ENCODE measurements at regions of chr1 and their contacts with region 1.

Region 1: DNA sequence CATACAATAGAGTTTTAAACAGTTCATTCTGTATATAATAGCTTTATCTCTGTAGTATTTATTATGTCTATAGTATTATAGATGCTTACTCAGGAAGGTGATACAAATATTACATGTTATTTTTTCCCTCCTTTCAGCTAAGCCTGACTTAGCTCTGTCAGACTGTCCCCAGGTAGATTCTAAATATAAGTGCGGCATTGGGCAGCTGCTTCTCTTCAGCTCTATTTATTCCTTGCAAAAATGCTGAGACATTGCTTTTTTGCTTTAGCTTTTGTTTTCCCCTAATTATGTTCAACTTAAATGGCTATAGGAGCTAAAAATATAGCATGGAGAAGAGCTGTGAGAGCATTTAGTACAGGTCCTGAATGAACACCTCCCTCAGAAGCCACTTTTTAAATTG is 203.2 kb upstream of the BEND5 start:
- DNase-seq: no peak
- H3K4me3 ChIP-seq: no peak overlapping the region
- H3K27ac ChIP-seq: no peak overlapping the region
- H3K4me1 ChIP-seq: no peaks in the 10 kb centered on the region
- H3K27me3 ChIP-seq: no peaks in the 10 kb centered on the region
- CTCF ChIP-seq: no peak
- POLR2A ChIP-seq: no peak

Region 2: GRCh38 chr1:50368179-50369012 is 1388.5 kb after region 1 on chr1:
- intact Hi-C with region 1: loop called (anchors 10 kb)
- DNase-seq: no peak
- H3K4me3 ChIP-seq: peak overlapping the region in 1 of 3 donors; percentile 47
- H3K27ac ChIP-seq: no peak overlapping the region
- H3K4me1 ChIP-seq: no peaks in the 10 kb centered on the region
- H3K27me3 ChIP-seq: peaks cover 0 to 16% of the 10 kb centered on the region in 2 donors
- CTCF ChIP-seq: peak; percentile 63 to 81 (median 74)
- POLR2A ChIP-seq: no peak

Measured in breast epithelium (tissue), 4 donors.